ENCODE measurements at regions of chr14 and their contacts with region 1.

Region 1: GRCh38 chr14:54773171-54773975 is 129.3 kb downstream of the GCH1 start:
- DNase-seq: peak; percentile 67 to 83
- H3K4me3 ChIP-seq: no peak overlapping the region
- H3K27ac ChIP-seq: no peak overlapping the region
- H3K4me1 ChIP-seq: peaks cover 0 to 11% (median 2%) of the 10 kb centered on the region in 4 experiments; a peak in 4 of 7 replicates
- H3K27me3 ChIP-seq: no peaks in the 10 kb centered on the region
- CTCF ChIP-seq: peak; percentile 40 to 74 (median 70)
- EP300 ChIP-seq: peak in 1 of 2 experiments; percentile 10; a peak in 1 of 3 replicates
- POLR2A ChIP-seq: no peak
- RAD21 ChIP-seq: peak; percentile 71 to 75

Region 2: DNA sequence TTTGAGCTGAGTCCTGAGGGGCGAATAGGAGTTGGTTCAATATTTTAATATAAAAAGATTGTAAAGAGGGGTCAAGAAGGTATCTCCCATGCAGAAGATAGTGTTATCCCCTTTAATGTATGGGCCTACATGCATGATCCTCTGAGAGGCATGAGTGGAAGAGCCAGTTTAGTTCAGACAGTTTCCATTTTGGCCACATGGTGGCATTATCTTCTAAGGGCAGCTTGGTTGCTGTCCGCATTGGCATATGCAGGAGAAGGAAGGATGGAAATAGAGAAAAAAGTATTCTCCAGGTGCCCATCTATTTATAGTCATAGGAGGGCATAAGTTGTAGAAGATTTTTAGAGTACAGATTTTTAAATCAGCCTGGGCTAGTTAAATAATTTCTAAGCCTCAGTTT is 201.1 kb before region 1 on chr14:
- CTCF ChIA-PET with region 1: interaction called, 98 read pairs
- POLR2A ChIA-PET with region 1: interaction called, 20 read pairs
- DNase-seq: no peak
- H3K4me3 ChIP-seq: no peak overlapping the region
- H3K27ac ChIP-seq: no peak overlapping the region
- H3K4me1 ChIP-seq: peaks cover 2 to 8% (median 5%) of the 10 kb centered on the region in 4 experiments; a peak in 6 of 7 replicates
- H3K27me3 ChIP-seq: peaks cover 0 to 12% (median 5%) of the 10 kb centered on the region in 4 experiments; a peak in 4 of 7 replicates
- CTCF ChIP-seq: peak; percentile 20 to 94 (median 82)
- EP300 ChIP-seq: no peak
- POLR2A ChIP-seq: no peak
- RAD21 ChIP-seq: peak; percentile 97 to 98

Region 3: GRCh38 chr14:54691525-54692283 is 81.7 kb before region 1 on chr14:
- CTCF ChIA-PET with region 1: interaction called, 53 read pairs
- POLR2A ChIA-PET with region 1: no interaction called
- DNase-seq: peak; percentile 53 to 86
- H3K4me3 ChIP-seq: no peak overlapping the region
- H3K27ac ChIP-seq: no peak overlapping the region
- H3K4me1 ChIP-seq: peaks cover 0 to 6% (median 0%) of the 10 kb centered on the region in 4 experiments; a peak in 3 of 7 replicates
- H3K27me3 ChIP-seq: no peaks in the 10 kb centered on the region
- CTCF ChIP-seq: peak; percentile 92 to 98 (median 96)
- EP300 ChIP-seq: no peak
- POLR2A ChIP-seq: no peak
- RAD21 ChIP-seq: peak; percentile 95

Region 4: DNA sequence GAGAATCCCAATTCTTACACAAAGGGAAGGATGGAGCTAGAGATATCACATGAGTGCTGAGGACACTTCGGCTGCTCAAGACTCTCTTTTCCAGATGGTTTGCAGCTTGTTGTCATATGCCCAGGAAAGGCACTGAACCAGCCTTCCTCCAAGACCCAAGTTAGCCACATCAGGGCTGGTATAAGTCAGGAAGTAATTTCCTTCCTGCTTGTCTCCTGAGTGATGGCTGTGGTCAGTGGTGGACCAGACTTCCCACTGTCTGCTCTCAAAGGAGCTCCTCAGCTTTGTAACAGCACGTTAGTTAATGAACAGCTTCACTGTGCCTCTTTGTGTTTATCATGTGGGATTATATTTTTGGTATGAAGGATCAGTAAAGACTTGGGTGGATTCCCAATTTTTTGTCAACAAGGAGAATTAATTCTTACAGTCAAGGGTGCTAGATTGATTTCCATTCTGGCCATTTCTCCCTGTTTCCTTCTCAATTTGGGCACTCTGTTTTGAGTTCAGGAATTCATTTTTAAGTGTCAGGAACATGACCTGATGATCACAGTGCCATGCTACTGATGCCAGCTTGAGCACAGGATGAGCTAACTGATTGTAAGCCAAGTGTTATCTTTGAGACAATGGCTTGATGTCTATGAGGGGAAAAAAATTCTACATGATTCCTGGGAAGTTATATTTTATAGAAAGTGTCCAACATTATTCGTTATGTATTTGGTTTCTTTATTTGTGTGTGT is 16.5 kb before region 1 on chr14:
- CTCF ChIA-PET with region 1: interaction called, 26 read pairs
- POLR2A ChIA-PET with region 1: interaction called, 4 read pairs
- DNase-seq: no peak
- H3K4me3 ChIP-seq: no peak overlapping the region
- H3K27ac ChIP-seq: no peak overlapping the region
- H3K4me1 ChIP-seq: no peaks in the 10 kb centered on the region
- H3K27me3 ChIP-seq: no peaks in the 10 kb centered on the region
- CTCF ChIP-seq: no peak
- EP300 ChIP-seq: no peak
- POLR2A ChIP-seq: no peak
- RAD21 ChIP-seq: no peak

Region 5: GRCh38 chr14:54805521-54806322 is 32.3 kb after region 1 on chr14:
- CTCF ChIA-PET with region 1: interaction called, 86 read pairs
- POLR2A ChIA-PET with region 1: no interaction called
- DNase-seq: peak; percentile 70 to 94
- H3K4me3 ChIP-seq: no peak overlapping the region; a peak in 1 of 8 replicates
- H3K27ac ChIP-seq: no peak overlapping the region
- H3K4me1 ChIP-seq: peaks cover 2 to 15% (median 8%) of the 10 kb centered on the region in 4 experiments; a peak in 5 of 7 replicates
- H3K27me3 ChIP-seq: no peaks in the 10 kb centered on the region; a peak in 1 of 7 replicates
- CTCF ChIP-seq: peak; percentile 89 to 94 (median 92)
- EP300 ChIP-seq: 0 out of 3 replicates have a peak, but pooled peaks of 1 of the 2 experiments have one; percentile 35
- POLR2A ChIP-seq: no peak
- RAD21 ChIP-seq: peak; percentile 93

Region 6: GRCh38 chr14:54838931-54839512 is 65.6 kb after region 1 on chr14:
- CTCF ChIA-PET with region 1: no interaction called
- POLR2A ChIA-PET with region 1: no interaction called
- DNase-seq: no peak
- H3K4me3 ChIP-seq: no peak overlapping the region
- H3K27ac ChIP-seq: no peak overlapping the region
- H3K4me1 ChIP-seq: no peaks in the 10 kb centered on the region
- H3K27me3 ChIP-seq: no peaks in the 10 kb centered on the region
- CTCF ChIP-seq: no peak
- EP300 ChIP-seq: no peak
- POLR2A ChIP-seq: no peak
- RAD21 ChIP-seq: no peak

Region 7: DNA sequence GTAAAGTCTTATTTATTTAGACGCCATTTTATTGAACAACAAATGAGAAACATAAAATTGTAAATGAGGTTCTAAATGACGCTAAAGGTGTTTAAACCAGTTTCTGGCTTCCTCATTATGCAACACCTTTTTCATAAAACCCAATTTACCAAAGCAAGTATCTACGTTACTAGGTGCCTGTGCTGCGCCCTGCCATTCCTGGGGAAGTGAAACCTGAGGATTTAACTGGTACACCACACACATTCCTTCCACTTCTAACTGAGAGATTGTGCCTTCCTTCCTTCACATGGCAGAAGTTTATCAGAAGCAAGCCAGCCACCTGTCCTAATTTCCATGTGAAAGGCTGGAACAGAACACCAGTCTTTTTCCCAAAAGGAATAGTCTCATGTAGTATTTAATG is 169.5 kb after region 1 on chr14:
- CTCF ChIA-PET with region 1: no interaction called
- POLR2A ChIA-PET with region 1: no interaction called
- DNase-seq: no peak
- H3K4me3 ChIP-seq: no peak overlapping the region
- H3K27ac ChIP-seq: no peak overlapping the region
- H3K4me1 ChIP-seq: no peaks in the 10 kb centered on the region
- H3K27me3 ChIP-seq: no peaks in the 10 kb centered on the region
- CTCF ChIP-seq: no peak
- EP300 ChIP-seq: no peak
- POLR2A ChIP-seq: no peak
- RAD21 ChIP-seq: no peak